Body of pancreas (tissue), 4 donors: ENCODE measurements at regions of chrX and their contacts with region 1.

Region 1: GRCh38 chrX:45515262-45516215 is 314.9 kb upstream of the DIPK2B start:
- DNase-seq: peak; percentile 45 to 86 (median 72)
- ATAC-seq: peak; percentile 95
- H3K4me3 ChIP-seq: no peak overlapping the region
- H3K27ac ChIP-seq: peak overlapping the region in 3 of 4 donors; percentile 58 to 67 (median 67)
- H3K4me1 ChIP-seq: no peaks in the 10 kb centered on the region
- H3K27me3 ChIP-seq: no peaks in the 10 kb centered on the region
- CTCF ChIP-seq: peak; percentile 12 to 65 (median 55)
- POLR2A ChIP-seq: no peak

Region 2: DNA sequence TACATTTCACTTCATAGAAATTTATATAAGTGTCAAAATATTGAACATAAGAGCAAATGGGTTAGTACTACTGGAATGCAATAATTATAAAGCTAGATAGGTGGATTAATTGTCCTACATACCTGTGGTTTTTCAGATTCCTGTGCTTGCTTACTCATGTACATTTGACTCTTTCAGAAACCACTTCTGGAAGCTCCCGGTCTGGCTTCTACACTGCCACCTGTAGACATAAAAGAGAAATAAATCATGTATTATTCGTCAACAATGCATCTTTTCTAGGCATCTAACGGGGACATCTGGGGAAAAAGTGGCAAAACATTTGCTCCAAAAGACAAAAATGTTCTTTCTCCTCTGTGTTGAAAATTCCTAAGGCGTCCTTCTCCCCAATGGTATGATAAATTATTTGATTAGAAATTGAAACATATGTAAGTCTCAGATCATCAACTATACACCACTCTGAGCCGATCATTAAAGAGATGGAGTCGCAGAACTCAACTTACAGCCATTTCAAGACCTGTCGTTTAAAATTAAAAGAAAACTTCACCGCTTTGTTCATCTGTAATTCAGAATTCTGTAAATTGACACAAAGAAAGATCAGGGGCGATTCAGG is 333.8 kb after region 1 on chrX:
- intact Hi-C with region 1: loop called (anchors 5 kb)
- DNase-seq: peak in 2 of 4 donors; percentile 22 to 24
- ATAC-seq: no peak
- H3K4me3 ChIP-seq: no peak overlapping the region
- H3K27ac ChIP-seq: no peak overlapping the region
- H3K4me1 ChIP-seq: no peaks in the 10 kb centered on the region
- H3K27me3 ChIP-seq: no peaks in the 10 kb centered on the region
- CTCF ChIP-seq: peak in 4 of 7 experiments; percentile 9 to 41 (median 28)
- POLR2A ChIP-seq: no peak